ENCODE measurements at regions of chr2 and their contacts with region 1.

Region 1: DNA sequence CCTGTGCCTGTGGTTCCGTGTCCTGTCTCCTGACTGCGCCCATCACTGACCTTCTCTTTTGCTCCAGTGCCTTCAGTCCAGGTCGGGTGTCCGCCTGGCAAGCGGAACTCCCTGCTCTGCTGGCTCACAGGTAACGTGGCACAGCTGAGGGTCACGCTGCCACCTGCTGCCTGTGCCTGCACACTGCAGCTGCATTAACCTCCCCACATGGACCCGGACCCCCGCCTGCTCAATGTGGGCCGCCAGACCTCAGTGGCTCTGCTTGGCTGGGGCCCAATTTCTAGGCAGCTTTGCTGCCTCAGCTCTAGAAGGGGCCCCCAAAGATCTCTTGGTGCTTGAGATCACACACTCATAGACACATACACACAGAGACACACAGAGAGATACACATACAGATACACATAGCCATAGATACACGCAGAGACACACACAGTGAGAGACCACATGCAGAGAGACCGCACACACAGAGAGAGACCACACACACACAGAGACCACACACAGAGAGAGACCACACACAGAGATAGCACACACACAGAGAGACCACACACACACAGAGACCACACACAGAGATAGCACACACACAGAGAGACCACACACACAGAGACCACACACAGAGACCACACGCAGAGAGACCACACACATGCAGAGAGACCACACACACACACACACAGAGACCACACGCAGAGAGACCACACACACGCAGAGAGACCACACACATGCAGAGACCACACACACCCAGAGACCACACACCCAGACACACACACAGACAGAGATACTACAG is 14.9 kb upstream of the CNNM3 start:
- DNase-seq: peak in 1 of 2 donors; percentile 80
- H3K4me3 ChIP-seq: no peak overlapping the region
- H3K27ac ChIP-seq: no peak overlapping the region
- H3K4me1 ChIP-seq: peaks cover 0 to 4% of the 10 kb centered on the region in 2 donors
- H3K27me3 ChIP-seq: no peaks in the 10 kb centered on the region
- CTCF ChIP-seq: peak; percentile 77 to 89 (median 88)

Region 2: GRCh38 chr2:96739633-96740428 is 61.4 kb before region 1 on chr2 and contains the start of gene LMAN2L:
- intact Hi-C with region 1: loop called (anchors 5 kb)
- DNase-seq: peak; percentile 97 to 99
- H3K4me3 ChIP-seq: peak within 1 kb of the TSS; percentile 80 to 92
- H3K27ac ChIP-seq: peak within 1 kb of the TSS; percentile 66 to 73
- H3K4me1 ChIP-seq: peaks cover 0 to 19% of the 10 kb centered on the region in 2 donors
- H3K27me3 ChIP-seq: no peaks in the 10 kb centered on the region
- CTCF ChIP-seq: peak in 1 of 3 experiments; percentile 9
- total RNA-seq, gene LMAN2L: 9.5 TPM